ENCODE measurements at regions of chr7 and their contacts with region 1.

Region 1: GRCh38 chr7:150988230-150989226 is 2.3 kb upstream of the NOS3 start:
- DNase-seq: peak; percentile 57
- H3K4me3 Mint-ChIP-seq: peak overlapping the region; percentile 58
- H3K27ac Mint-ChIP-seq: no peak overlapping the region
- H3K4me1 Mint-ChIP-seq: peaks cover 25% of the 10 kb centered on the region
- H3K27me3 Mint-ChIP-seq: peaks cover 30% of the 10 kb centered on the region

Region 2: DNA sequence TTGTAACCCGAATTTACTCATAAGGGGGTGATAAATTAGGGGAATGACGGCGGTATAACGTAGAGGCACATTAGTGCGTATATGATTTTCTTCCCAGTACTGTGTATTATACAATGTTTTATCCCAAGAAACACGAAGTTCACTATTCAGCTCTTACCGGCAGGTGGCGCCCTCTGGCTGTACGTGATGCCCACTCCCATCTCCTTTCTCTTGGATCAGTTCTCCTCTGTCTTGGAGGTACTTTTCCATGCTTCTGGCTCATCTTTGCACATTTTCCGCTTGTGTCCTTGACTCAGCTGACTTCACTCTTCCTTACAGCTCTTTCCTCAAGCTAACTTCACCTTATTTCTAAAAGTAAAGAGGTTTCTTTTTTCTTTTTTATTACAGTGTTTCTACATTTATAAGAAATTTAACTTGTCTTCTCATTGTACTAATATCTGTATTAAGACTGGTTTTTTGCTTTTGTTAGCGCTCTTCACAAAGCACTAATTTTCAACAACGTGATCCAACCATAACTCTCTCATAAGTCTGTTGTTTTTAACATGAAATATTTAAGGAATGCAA is 209.7 kb before region 1 on chr7:
- intact Hi-C with region 1: loop called (anchors 1 kb)
- DNase-seq: peak; percentile 54
- H3K4me3 Mint-ChIP-seq: no peak overlapping the region
- H3K27ac Mint-ChIP-seq: no peak overlapping the region
- H3K4me1 Mint-ChIP-seq: peaks cover 9% of the 10 kb centered on the region
- H3K27me3 Mint-ChIP-seq: peaks cover 29% of the 10 kb centered on the region

Region 3: DNA sequence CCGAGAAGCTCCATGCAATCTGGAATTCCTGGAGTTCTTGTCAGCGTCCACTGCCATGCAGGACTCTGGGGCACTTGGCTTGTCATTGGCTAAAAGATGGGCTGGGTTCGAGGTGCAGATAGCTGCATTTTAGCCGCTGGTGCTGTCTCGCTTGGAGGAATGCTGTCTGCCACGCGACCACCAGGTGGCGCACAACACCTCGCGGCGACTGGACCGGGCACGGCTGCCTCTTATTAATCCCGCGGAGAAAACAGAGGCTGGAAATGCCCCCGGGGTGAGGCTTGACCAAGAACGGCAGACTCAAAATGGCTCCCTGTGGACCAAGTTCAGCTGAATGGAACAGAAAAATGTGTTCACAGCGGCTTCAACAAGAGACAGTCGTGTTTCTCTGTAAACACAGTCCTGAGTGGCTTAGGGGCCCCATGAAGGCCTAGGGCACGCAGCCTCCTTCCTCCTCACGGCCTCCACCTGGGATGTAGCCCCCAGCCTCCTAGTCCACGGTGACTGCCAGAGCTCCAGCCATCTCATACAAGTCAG is 90.0 kb before region 1 on chr7:
- intact Hi-C with region 1: loop called (anchors 1 kb)
- DNase-seq: peak; percentile 56
- H3K4me3 Mint-ChIP-seq: no peak overlapping the region
- H3K27ac Mint-ChIP-seq: no peak overlapping the region
- H3K4me1 Mint-ChIP-seq: peaks cover 6% of the 10 kb centered on the region
- H3K27me3 Mint-ChIP-seq: peaks cover 33% of the 10 kb centered on the region

Region 4: GRCh38 chr7:150962553-150963399 is 25.8 kb before region 1 on chr7:
- intact Hi-C with region 1: loop called (anchors 1 kb)
- DNase-seq: peak; percentile 39
- H3K4me3 Mint-ChIP-seq: no peak overlapping the region
- H3K27ac Mint-ChIP-seq: no peak overlapping the region
- H3K4me1 Mint-ChIP-seq: no peaks in the 10 kb centered on the region
- H3K27me3 Mint-ChIP-seq: peaks cover 28% of the 10 kb centered on the region